ENCODE measurements at regions of chr18 and their contacts with region 1.

Region 1: DNA sequence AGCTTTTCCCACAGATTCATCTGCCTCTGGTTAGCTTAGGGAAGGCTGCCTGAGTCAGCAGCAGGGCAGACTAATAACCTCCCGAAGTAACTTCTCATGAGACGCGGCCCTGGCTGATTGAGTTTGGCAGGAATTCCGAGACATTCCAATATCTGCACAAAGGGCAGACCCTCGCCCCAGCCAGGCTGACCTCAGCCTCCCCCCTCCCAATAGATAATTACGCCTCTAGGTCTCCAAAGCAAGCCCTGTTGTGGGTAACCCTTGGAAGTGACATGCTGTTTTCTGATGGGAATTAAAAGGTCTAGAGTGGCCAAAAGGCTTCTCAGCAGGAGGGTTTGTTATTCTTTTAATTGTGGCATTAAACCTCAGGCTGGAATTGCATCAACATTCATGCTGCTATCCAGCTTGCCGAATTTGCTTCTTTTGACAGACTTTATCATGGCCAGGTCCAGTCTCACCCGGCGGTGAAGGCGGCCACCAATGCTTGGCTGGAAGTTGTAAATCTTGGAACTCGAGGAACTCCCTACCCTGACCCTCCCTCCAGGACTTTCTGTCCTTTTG is 98.0 kb upstream of the SLC14A2 start:
- DNase-seq: peak; percentile 94

Region 2: DNA sequence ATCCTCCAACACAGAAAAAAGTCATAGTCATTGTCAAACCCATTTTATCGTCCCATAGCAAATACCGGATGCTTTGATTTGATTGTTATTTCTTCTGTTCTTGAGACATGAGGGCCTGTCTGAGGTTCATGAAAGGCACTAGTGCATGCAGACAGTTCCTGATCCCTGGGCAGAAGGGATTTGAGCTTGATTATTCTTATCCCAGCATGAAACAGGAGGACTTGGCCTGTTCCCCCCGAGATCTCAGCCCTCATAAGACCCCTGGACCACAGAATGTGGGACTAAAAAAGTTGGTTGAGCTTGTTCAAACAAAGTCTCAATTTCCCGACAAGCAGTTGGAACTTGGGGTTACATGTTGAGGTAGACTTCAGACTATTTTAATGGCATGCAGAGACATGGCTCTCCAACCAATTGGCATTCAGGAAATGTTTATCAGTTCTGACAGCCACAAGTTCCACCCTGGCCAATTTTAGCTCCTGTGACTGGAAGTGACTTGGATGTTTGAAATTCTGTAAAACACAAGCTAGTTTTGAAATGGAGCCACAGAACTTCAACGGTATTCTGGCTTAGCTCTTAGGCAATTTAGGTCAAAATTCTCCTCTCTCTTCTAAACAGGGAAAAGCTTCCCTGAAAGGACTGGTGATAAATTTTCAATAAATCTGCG is 268.9 kb before region 1 on chr18:
- intact Hi-C with region 1: loop called (anchors 5 to 10 kb)
- DNase-seq: no peak

Region 3: DNA sequence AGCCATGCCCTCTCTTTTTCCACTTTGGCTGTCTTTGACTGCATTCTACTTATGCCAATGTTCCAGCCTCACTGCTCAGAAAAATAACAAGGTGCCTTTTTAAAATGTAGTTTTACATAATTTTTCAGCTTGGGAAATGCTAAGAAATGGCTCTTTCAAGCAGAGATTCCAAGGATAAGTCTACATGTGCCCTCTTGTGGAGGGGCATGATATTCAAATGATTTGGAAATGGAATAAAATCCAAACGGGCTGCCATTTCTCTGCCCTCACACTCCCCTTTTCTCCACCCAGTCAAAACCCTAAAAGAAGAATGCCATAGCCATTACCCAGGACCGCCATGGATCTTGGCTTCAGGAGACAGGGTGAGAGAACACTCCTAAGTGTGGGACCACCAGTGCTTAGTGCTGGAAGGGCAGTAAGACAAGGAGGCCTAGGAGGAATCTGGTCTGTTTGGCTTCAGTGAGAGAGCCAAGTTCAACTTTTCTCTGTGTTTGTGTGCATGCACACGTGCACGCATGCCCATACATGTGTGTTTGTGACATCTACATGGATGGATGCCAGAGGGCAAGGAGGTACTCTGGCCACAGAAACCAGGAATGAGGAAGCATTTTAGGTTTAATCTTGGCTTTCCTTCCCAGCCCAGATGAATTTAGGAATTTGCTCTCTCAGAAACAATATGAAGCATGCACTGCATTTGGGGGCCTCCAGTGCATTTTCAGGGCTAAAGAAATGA is 76.0 kb before region 1 on chr18:
- intact Hi-C with region 1: no loop called
- DNase-seq: no peak